ENCODE measurements at regions of chr2 and their contacts with region 1.

Region 1: DNA sequence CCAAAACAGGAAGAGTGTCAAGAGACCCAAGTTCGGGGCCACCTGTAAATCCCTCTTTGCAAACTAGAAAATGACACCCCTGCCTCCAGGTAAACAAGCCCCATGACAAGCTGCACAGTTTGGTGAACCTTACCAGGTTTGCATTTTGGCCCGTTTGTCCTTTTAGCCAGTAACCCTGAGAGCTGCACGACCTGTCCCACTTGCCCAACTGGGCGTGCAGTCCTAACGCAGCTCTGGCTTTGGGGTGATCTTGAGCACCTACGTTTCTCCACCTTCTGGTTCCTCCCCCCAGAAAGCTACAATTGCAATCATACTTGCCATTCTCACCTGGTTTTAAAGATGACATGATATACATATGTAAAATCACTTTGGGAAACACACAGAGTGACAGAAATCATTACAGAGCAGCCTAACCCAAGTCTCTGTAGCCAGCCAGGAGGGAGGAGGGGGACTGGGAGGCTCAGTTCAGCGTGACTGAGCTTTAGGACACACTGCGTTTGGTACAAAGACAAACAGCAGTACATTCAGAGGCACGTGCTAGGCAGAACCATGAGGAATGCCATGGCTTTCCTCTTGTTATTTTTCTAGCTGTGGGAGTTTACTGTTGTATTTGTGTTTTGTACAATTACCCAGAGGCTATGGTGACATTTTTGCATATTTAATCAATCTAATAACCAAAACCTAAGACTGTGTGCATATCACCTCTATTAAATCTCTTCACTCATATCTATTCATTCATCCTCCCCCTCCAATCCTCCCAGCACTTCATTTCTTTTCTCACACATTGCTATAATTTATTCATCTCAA is 304.0 kb downstream of the IRS1 start:
- DNase-seq: no peak
- H3K4me3 ChIP-seq: no peak overlapping the region
- H3K27ac ChIP-seq: no peak overlapping the region
- H3K4me1 ChIP-seq: no peaks in the 10 kb centered on the region
- H3K27me3 ChIP-seq: no peaks in the 10 kb centered on the region
- CTCF ChIP-seq: no peak
- POLR2A ChIP-seq: no peak

Region 2: DNA sequence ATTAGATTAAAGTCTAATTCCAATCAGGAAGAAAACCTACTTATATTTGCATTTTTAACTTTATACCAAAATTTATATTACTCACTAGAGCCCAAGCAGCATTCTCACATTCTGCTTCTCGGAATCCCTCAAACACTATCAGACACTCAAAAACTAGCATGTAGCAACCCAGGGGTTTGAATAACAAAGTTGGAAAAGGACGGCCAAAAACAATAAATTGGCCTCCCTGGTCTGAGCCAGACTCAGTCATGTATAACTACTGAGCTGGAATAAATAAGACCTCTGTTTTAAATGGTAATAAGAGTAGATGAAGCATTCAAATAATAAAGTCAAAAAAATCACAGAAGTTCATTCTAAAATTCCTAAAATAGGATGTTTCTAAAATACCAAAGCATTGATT is 13.0 kb after region 1 on chr2:
- intact Hi-C with region 1: loop called (anchors 2 kb)
- DNase-seq: no peak
- H3K4me3 ChIP-seq: no peak overlapping the region
- H3K27ac ChIP-seq: no peak overlapping the region
- H3K4me1 ChIP-seq: no peaks in the 10 kb centered on the region
- H3K27me3 ChIP-seq: no peaks in the 10 kb centered on the region
- CTCF ChIP-seq: no peak
- POLR2A ChIP-seq: no peak

Region 3: GRCh38 chr2:226673314-226673723 is 177.7 kb after region 1 on chr2:
- intact Hi-C with region 1: no loop called
- DNase-seq: no peak
- H3K4me3 ChIP-seq: no peak overlapping the region
- H3K27ac ChIP-seq: no peak overlapping the region
- H3K4me1 ChIP-seq: peaks cover 16% of the 10 kb centered on the region
- H3K27me3 ChIP-seq: no peaks in the 10 kb centered on the region
- CTCF ChIP-seq: no peak
- POLR2A ChIP-seq: no peak